Uterus (tissue), 4 donors: ENCODE measurements at regions of chr3 and their contacts with region 1.

Region 1: DNA sequence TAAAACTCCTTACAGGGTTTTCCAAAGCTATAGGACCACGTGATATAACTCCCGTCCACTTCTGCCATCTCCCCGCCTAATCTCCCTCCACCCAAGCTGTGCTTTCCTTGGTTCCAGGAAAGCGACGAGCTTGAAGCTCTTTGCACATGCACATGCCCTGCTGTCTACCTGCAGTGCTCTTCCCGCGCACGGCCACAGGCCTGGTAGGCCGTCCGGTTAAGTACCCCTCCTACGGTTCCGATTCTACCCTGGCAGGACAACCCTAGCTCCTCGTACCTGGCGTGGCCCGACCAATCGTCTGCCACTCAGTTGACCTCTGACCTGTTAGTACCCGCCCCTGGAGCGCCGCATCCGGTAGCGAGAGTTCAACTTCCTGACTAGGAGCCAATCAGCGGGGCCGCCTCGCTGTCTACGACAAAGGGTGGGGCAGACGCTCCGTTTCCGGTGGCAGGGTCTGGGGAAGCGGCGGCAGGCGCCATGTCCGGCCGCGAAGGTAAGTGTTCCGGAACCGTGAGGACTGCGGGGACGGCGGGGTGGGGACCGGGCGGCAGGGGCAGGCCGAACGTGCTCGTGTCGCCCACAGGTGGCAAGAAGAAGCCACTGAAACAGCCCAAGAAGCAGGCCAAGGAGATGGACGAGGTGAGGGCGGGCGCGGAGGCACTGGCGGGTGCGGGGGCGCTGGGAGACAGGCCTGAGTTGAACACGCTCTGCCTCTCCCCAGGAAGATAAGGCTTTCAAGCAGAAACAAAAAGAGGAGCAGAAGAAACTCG is at the starts of genes CCDC51 and TMA7:
- DNase-seq: peak; percentile 98
- H3K4me3 ChIP-seq: peak within 1 kb of the TSS; percentile 55 to 92
- H3K27ac ChIP-seq: peak within 1 kb of the TSS; percentile 87 to 90
- H3K4me1 ChIP-seq: peaks cover 0 to 12% of the 10 kb centered on the region in 2 donors
- H3K27me3 ChIP-seq: no peaks in the 10 kb centered on the region
- CTCF ChIP-seq: peak in 2 of 4 experiments; percentile 11 to 16
- POLR2A ChIP-seq: peak; percentile 80 to 94
- total RNA-seq, gene CCDC51: 2.6 to 11.1 (median 7.8) TPM
- total RNA-seq, gene TMA7: 94.8 to 195 (median 141) TPM

Region 2: DNA sequence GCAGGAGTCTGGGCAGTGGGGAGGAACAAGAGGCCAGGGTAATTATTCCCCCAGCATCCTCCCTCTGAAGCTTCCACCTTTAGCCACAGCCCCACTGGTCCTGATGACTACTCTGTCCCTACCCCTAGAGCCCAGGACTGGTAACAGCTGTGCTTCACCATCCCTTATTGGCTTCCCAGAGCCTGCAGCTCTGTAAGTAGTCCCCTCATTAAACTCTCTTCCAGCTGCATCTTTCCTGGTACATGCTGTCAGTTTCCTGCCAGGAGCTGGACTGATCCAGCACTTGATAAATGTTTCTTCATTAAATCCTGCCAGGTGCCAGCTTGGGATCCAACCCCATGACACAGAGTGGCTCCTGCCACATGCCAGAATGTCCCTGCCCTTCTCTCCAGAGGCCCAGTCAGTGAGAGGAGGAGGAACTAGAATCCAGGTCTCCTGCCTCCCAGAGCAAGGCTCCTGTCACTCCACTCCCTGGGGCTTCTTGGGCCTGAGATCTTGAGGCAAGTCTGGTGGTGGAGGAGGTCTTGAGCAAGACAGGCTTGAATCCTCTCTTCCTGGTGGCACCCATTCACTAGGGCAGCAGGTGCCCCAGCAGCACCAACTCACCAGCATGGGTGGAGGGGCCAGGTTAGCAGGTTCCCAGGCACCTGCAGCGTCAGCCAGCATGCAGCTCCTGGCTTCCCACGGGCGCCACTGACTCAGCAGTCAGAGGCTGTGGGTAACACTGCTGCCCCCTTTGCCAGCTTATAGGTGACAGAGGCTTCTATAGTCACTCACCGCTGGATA is 40.4 kb before region 1 on chr3:
- intact Hi-C with region 1: loop called (anchors 5 kb)
- DNase-seq: no peak
- H3K4me3 ChIP-seq: no peak overlapping the region
- H3K27ac ChIP-seq: no peak overlapping the region
- H3K4me1 ChIP-seq: peaks cover 0 to 11% of the 10 kb centered on the region in 2 donors
- H3K27me3 ChIP-seq: no peaks in the 10 kb centered on the region
- CTCF ChIP-seq: no peak
- POLR2A ChIP-seq: no peak